PC-9 (cell line): ENCODE measurements at regions of chr10 and their contacts with region 1.

Region 1: GRCh38 chr10:11611248-11612020 is at the start of gene USP6NL:
- DNase-seq: peak; percentile 66 to 92
- H3K4me3 ChIP-seq: peak within 1 kb of the TSS; percentile 98
- H3K27ac ChIP-seq: peak within 1 kb of the TSS; percentile 76
- H3K4me1 ChIP-seq: peaks cover 29% of the 10 kb centered on the region
- H3K27me3 ChIP-seq: no peaks in the 10 kb centered on the region
- CTCF ChIP-seq: no peak
- total RNA-seq, gene USP6NL: 16.8 and 22.1 TPM in 2 replicates

Region 2: GRCh38 chr10:11533328-11533781 is 78.1 kb before region 1 on chr10:
- CTCF ChIA-PET with region 1: no interaction called
- POLR2A ChIA-PET with region 1: no interaction called
- intact Hi-C with region 1: loop called (anchors 5 kb)
- DNase-seq: no peak
- H3K4me3 ChIP-seq: no peak overlapping the region
- H3K27ac ChIP-seq: no peak overlapping the region
- H3K4me1 ChIP-seq: no peaks in the 10 kb centered on the region
- H3K27me3 ChIP-seq: no peaks in the 10 kb centered on the region
- CTCF ChIP-seq: no peak

Region 3: GRCh38 chr10:11551916-11552602 is 59.4 kb before region 1 on chr10:
- CTCF ChIA-PET with region 1: no interaction called
- POLR2A ChIA-PET with region 1: interaction called, 8 read pairs
- intact Hi-C with region 1: loop called (anchors 2 kb)
- DNase-seq: peak; percentile 32 to 95
- H3K4me3 ChIP-seq: peak overlapping the region; percentile 21; the same call in 1 of the 2 replicates
- H3K27ac ChIP-seq: peak overlapping the region; percentile 99
- H3K4me1 ChIP-seq: peaks cover 30% of the 10 kb centered on the region
- H3K27me3 ChIP-seq: no peaks in the 10 kb centered on the region
- CTCF ChIP-seq: no peak

Region 4: DNA sequence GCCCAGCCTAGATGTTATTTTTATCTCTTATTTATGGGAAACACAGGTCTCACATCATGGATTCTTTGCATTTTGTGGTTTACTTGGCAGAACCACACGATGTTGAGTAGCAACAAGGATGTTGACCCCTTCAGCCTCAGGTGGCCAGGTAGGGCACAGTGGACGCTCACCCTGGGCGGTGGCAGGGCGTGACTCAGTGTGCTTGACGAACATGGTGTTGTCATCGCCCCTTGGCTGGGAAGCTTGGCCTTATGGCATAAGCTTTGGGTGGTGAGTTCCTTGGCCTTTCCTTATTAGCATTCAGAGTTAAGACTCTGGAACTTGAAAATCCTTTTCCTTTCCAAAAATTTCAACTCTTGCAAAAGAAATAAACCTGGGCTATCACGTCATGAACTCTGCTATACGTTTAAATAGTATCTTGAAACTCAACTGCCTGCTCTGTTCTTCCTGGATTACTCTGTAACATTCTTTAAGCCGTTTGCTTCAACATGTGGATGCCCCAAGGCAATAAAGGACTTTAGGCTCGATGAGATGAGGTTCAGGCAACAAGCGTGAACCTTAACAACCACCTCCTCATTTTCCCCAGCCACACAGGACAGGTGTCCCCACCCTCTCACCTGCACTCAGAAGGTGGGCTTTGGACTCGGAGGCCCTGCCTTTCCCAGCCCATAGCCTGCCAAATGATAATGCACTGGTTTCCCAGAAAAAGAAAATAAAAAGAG is 108.2 kb after region 1 on chr10:
- CTCF ChIA-PET with region 1: no interaction called
- POLR2A ChIA-PET with region 1: no interaction called
- intact Hi-C with region 1: loop called (anchors 1 kb)
- DNase-seq: peak; percentile 91 to 96
- H3K4me3 ChIP-seq: no peak overlapping the region
- H3K27ac ChIP-seq: peak overlapping the region; percentile 64
- H3K4me1 ChIP-seq: peaks cover 34% of the 10 kb centered on the region
- H3K27me3 ChIP-seq: no peaks in the 10 kb centered on the region
- CTCF ChIP-seq: no peak

Region 5: DNA sequence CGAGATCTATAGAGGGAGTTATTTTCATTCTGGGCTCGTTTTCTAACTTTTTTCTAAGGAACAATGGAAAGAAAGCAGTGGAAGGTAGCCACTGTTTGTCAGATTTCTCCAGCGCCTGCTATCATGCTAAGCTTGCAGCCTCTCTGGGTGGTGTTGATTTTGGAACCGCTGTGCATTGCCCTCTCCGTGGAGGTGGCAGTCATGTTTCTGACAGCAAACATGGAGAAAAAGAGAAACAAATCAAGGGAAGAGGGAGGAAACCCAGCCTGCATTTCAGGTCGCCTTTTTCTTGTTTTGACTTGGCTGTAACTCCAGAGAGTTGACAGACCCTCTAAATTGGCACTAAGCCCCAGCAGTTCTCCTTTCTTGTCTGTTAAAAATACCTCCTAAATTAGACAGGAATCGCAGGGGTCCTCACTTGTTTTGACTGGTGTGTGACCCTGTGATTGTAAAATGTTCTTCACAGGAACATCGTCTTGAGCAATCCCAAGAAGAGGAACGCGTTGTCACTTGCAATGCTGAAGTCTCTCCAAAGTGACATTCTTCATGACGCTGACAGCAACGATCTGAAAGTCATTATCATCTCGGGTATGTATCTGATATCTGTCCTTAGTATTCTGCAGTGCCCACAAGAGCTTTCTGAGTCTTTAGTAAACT is 135.6 kb after region 1 on chr10:
- CTCF ChIA-PET with region 1: no interaction called
- POLR2A ChIA-PET with region 1: no interaction called
- intact Hi-C with region 1: no loop called
- DNase-seq: no peak
- H3K4me3 ChIP-seq: no peak overlapping the region
- H3K27ac ChIP-seq: no peak overlapping the region
- H3K4me1 ChIP-seq: no peaks in the 10 kb centered on the region
- H3K27me3 ChIP-seq: no peaks in the 10 kb centered on the region
- CTCF ChIP-seq: no peak

Region 6: DNA sequence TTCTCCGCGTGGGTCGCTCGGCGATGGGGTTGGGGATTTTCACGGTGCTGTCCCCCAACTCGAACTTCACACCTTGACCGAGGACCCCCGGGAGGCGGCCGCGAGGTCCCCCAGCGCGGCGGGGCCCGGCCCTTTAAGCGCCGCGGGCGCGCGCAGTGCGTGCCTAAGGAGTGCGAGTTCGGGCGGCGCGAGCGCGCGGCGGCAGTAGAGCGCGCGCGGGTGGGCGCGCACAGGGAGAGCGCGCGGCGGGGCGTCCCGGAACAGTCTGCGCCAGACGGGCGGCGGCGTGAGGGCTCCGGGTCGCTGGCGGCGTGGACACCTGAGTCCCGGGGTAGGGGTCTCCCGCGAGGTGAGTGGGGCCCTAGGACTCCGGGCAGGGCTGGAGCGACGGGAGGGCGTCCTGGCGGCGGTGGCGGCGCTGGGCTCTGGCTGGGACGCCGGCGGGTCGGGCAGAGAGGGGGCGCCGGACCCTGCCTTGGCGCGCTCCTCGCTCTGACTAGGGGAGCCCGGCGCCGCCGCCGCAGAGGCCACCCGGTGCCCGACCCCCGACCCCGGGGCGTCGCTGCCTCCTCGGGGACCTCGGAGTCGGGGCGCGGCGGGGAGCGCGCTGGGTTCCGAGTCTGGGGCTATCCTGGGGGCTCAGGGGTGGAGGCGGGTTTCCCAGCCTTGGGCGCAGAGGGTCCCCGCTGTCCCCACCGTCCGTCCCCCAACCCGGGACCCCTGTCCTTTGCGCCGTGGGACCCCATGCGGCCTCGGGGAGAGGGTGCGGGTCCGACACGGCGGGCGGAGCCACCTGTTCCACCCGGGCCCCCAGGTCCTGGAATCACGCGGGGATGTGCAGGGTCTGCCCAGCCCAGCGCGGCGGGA is 211.9 kb after region 1 on chr10 and contains the start of gene PROSER2:
- CTCF ChIA-PET with region 1: no interaction called
- POLR2A ChIA-PET with region 1: no interaction called
- intact Hi-C with region 1: loop called (anchors 10 kb)
- DNase-seq: peak in 1 of 2 experiments; percentile 70
- H3K4me3 ChIP-seq: peak within 1 kb of the TSS; percentile 92
- H3K27ac ChIP-seq: peak within 1 kb of the TSS; percentile 73
- H3K4me1 ChIP-seq: peaks cover 65% of the 10 kb centered on the region
- H3K27me3 ChIP-seq: no peaks in the 10 kb centered on the region
- CTCF ChIP-seq: no peak
- total RNA-seq, gene PROSER2: 66.6 and 87.5 TPM in 2 replicates